ENCODE measurements at regions of chr22 and their contacts with region 1.

Region 1: GRCh38 chr22:39309881-39310714 is 9.3 kb downstream of the RPL3 start:
- DNase-seq: no peak
- H3K4me3 ChIP-seq: no peak overlapping the region
- H3K27ac ChIP-seq: peak overlapping the region in 3 of 5 donors; percentile 0 to 76 (median 74)
- H3K4me1 ChIP-seq: peaks cover under 1 to 70% (median 34%) of the 10 kb centered on the region in 4 donors
- H3K27me3 ChIP-seq: no peaks in the 10 kb centered on the region
- CTCF ChIP-seq: no peak
- EP300 ChIP-seq: no peak
- POLR2A ChIP-seq: no peak

Region 2: GRCh38 chr22:39170825-39171622 is 139.1 kb before region 1 on chr22:
- intact Hi-C with region 1: loop called (anchors 5 kb)
- DNase-seq: peak; percentile 88 to 93
- H3K4me3 ChIP-seq: peak overlapping the region in 2 of 4 donors; percentile 6 to 18
- H3K27ac ChIP-seq: peak overlapping the region in 1 of 5 donors; percentile 4
- H3K4me1 ChIP-seq: peaks cover 30 to 50% (median 42%) of the 10 kb centered on the region in 4 donors
- H3K27me3 ChIP-seq: no peaks in the 10 kb centered on the region
- CTCF ChIP-seq: peak in 6 of 7 experiments; percentile 65 to 97 (median 94)
- EP300 ChIP-seq: no peak
- POLR2A ChIP-seq: no peak

Region 3: GRCh38 chr22:39236321-39237317 is 73.5 kb before region 1 on chr22:
- intact Hi-C with region 1: loop called (anchors 5 kb)
- DNase-seq: peak; percentile 76 to 81
- H3K4me3 ChIP-seq: no peak overlapping the region
- H3K27ac ChIP-seq: peak overlapping the region; percentile 65 to 86 (median 70)
- H3K4me1 ChIP-seq: peaks cover 74 to 84% (median 79%) of the 10 kb centered on the region in 4 donors
- H3K27me3 ChIP-seq: peaks cover 0 to 77% (median 13%) of the 10 kb centered on the region in 3 donors
- CTCF ChIP-seq: no peak
- EP300 ChIP-seq: no peak
- POLR2A ChIP-seq: no peak

Measured in stomach (tissue), 19 donors.